GM10248 (cell line): ENCODE measurements at regions of chr3 and their contacts with region 1.

Region 1: GRCh38 chr3:136898954-136899353 is 36.9 kb downstream of the NCK1 start:
- DNase-seq: no peak
- CTCF ChIP-seq: no peak

Region 2: GRCh38 chr3:136162322-136162721 is 736.6 kb before region 1 on chr3:
- CTCF ChIA-PET with region 1: no interaction called
- POLR2A ChIA-PET with region 1: no interaction called
- DNase-seq: no peak
- CTCF ChIP-seq: no peak

Region 3: GRCh38 chr3:136885357-136886213 is 13.4 kb before region 1 on chr3:
- CTCF ChIA-PET with region 1: interaction called, 14 read pairs
- POLR2A ChIA-PET with region 1: no interaction called
- DNase-seq: no peak
- CTCF ChIP-seq: no peak